Endothelial cell of umbilical vein (primary cell): ENCODE measurements at regions of chr6 and their contacts with region 1.

Region 1: GRCh38 chr6:133923938-133924593 is 29.0 kb upstream of the TBPL1 start:
- DNase-seq: peak; percentile 82
- H3K4me3 ChIP-seq: no peak overlapping the region
- H3K27ac ChIP-seq: no peak overlapping the region
- H3K4me1 ChIP-seq: no peaks in the 10 kb centered on the region
- H3K27me3 ChIP-seq: peaks cover 13 to 31% of the 10 kb centered on the region in 2 experiments
- CTCF ChIP-seq: peak; percentile 59 to 60
- POLR2A ChIP-seq: no peak

Region 2: DNA sequence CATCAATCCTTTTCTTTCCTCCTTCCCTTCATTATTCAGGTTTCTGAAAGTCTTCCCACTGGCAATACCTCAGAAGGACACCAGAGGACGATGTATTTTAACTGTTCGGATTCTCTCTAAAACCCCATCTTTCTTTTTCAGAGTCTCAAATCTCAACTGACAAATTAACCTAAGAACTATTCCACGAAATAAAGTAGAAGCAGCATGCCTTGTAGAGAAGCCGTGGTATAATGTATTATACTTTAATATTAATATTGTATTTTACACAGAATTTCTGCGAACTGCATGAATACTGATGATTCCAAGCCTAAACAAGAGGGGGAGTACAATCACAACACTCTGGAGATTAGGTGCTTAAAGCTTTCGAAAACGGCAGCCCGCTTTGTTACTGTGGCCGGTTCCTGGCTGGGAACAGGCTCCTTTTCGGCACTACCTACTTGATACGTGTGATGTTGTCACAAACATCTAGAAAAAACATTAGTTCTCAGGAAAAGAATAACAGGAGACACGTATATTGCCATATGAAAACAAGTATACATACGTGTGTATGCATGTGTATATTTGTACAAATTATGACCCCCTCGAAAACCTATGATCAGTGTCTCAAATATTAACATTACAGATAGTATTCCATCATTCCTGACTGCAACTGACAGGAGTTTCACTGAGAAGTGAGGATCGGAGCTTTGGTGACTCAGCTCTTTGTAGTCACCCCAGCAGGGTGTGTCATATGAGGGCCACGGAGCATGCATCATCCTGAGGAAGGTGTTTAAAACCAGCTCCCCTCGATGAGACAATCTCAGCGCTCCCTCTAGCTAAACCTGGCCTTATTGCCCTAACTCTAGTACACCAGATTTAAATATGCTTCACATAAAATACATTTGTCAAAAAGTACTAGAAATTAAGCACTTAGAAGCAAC is 354.8 kb before region 1 on chr6:
- CTCF ChIA-PET with region 1: interaction called, 65 read pairs
- POLR2A ChIA-PET with region 1: no interaction called
- dilution Hi-C with region 1: no loop called
- intact Hi-C with region 1: loop called (anchors 1 kb)
- DNase-seq: peak; percentile 56
- H3K4me3 ChIP-seq: peak overlapping the region in 2 of 3 experiments; percentile 29 to 49
- H3K27ac ChIP-seq: no peak overlapping the region
- H3K4me1 ChIP-seq: peaks cover 5% of the 10 kb centered on the region
- H3K27me3 ChIP-seq: peaks cover 3 to 6% of the 10 kb centered on the region in 2 experiments
- CTCF ChIP-seq: peak; percentile 67 to 74
- POLR2A ChIP-seq: no peak

Region 3: DNA sequence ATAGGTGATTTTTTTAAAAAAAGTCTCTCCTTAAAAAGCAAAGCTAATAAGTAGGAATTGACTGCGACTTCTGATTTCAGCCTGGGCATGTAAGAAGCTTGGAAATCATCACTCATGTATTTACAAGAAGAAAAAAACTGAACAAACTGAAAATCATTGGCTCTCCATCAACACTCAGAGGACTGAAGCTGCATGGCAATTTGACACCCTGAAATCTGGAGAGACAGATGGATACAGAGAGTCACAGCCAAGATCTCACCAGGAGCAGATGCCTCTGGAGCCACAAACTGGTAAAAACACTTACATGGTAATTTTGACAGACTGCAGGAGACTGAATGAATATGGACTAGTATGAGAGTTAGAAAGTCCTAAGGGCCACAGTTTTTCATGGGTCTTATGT is 226.4 kb before region 1 on chr6:
- CTCF ChIA-PET with region 1: no interaction called
- POLR2A ChIA-PET with region 1: no interaction called
- dilution Hi-C with region 1: no loop called
- intact Hi-C with region 1: no loop called
- DNase-seq: no peak
- H3K4me3 ChIP-seq: no peak overlapping the region
- H3K27ac ChIP-seq: no peak overlapping the region
- H3K4me1 ChIP-seq: no peaks in the 10 kb centered on the region
- H3K27me3 ChIP-seq: no peaks in the 10 kb centered on the region
- CTCF ChIP-seq: no peak
- POLR2A ChIP-seq: no peak

Region 4: GRCh38 chr6:133945158-133945557 is 21.1 kb after region 1 on chr6:
- CTCF ChIA-PET with region 1: interaction called, 29 read pairs
- POLR2A ChIA-PET with region 1: no interaction called
- dilution Hi-C with region 1: no loop called
- intact Hi-C with region 1: no loop called
- DNase-seq: no peak
- H3K4me3 ChIP-seq: no peak overlapping the region
- H3K27ac ChIP-seq: no peak overlapping the region
- H3K4me1 ChIP-seq: no peaks in the 10 kb centered on the region
- H3K27me3 ChIP-seq: peaks cover 19 to 20% of the 10 kb centered on the region in 2 experiments
- CTCF ChIP-seq: no peak
- POLR2A ChIP-seq: no peak

Region 5: GRCh38 chr6:133973109-133973971 is 49.3 kb after region 1 on chr6:
- CTCF ChIA-PET with region 1: interaction called, 38 read pairs
- POLR2A ChIA-PET with region 1: no interaction called
- dilution Hi-C with region 1: no loop called
- intact Hi-C with region 1: loop called (anchors 1 kb)
- DNase-seq: peak; percentile 64
- H3K4me3 ChIP-seq: no peak overlapping the region
- H3K27ac ChIP-seq: no peak overlapping the region
- H3K4me1 ChIP-seq: peaks cover 4% of the 10 kb centered on the region
- H3K27me3 ChIP-seq: no peaks in the 10 kb centered on the region
- CTCF ChIP-seq: peak; percentile 42 to 45
- POLR2A ChIP-seq: no peak

Region 6: DNA sequence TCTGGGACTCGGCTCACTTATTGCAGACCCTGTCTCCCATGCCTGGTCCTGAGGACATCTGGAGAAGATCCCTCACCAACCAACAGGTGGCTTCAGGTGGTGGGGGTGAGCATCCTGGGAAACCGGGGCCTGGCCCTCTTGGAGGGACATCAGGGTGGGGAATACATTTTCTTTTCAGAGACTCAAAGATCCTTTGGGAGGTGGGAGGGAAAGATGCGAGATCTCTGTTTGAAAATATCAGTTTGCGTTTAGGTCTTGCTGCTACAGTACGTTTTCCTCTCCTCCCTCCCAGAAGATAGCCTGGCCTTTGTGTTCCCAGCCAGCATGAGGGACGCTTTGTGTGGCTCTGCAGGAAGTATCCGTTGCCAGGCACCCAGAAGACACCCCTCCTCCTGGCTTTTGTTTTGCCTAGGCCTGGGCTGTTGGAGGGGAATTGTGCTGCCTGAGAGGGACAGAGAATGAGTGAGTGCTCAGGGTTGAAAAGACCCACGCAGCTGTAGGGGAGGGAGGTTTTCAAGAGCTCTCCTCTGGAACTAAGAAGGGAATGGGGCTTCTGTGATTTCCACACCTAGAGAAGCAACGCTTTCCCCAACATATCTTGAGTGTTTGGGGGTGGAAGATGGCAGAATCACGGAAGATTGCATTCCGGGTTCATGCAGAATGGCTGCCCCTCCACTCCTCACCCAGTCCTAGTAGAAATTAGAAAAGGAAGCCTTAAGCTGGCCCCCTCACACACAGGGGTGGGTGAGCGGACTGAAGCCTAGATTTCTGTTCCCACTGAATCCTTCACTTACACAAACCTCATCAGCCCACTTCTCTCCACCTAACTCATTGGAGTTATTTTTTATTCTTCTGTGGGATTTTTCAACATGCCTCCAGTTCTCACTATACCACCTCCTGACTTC is 150.3 kb after region 1 on chr6:
- CTCF ChIA-PET with region 1: interaction called, 17 read pairs
- POLR2A ChIA-PET with region 1: no interaction called
- dilution Hi-C with region 1: no loop called
- intact Hi-C with region 1: no loop called
- DNase-seq: peak; percentile 33
- H3K4me3 ChIP-seq: no peak overlapping the region
- H3K27ac ChIP-seq: no peak overlapping the region
- H3K4me1 ChIP-seq: peaks cover 10% of the 10 kb centered on the region
- H3K27me3 ChIP-seq: peaks cover 4% of the 10 kb centered on the region in 2 experiments
- CTCF ChIP-seq: no peak
- POLR2A ChIP-seq: no peak

Region 7: DNA sequence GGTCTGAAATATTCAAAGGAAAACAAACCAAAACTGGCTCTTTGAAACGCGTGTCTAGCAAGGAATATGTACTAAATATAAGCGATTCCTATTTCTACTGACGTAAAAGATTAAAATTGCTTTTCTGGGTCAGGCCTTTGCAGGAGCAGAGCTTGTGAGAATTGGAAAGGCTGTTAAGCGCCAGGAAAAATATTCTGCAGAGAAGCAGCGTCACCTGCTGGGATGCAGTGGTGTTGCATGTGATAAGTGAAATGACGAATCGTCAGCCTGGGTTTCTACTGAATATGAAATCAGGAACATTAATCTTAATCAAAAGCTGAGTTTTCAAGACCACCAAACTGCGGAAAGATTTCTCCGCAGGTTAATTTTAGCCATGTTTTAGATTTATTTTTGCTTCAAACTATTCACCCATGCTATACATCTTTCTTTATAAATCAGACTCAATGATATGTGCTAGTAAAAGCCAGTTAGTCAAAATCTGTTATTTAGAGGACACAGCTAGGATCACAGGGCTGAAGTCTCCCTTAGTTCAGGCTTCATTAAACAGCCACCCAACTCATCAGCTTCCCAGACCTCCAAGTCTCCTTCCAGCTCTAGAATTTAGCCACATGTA is 958.5 kb after region 1 on chr6:
- CTCF ChIA-PET with region 1: no interaction called
- POLR2A ChIA-PET with region 1: no interaction called
- dilution Hi-C with region 1: no loop called
- intact Hi-C with region 1: loop called (anchors 10 kb)
- DNase-seq: peak; percentile 79
- H3K4me3 ChIP-seq: no peak overlapping the region
- H3K27ac ChIP-seq: peak overlapping the region; percentile 3
- H3K4me1 ChIP-seq: peaks cover 13% of the 10 kb centered on the region
- H3K27me3 ChIP-seq: no peaks in the 10 kb centered on the region
- CTCF ChIP-seq: peak; percentile 82
- POLR2A ChIP-seq: no peak